ENCODE measurements at regions of chr1 and their contacts with region 1.

Region 1: DNA sequence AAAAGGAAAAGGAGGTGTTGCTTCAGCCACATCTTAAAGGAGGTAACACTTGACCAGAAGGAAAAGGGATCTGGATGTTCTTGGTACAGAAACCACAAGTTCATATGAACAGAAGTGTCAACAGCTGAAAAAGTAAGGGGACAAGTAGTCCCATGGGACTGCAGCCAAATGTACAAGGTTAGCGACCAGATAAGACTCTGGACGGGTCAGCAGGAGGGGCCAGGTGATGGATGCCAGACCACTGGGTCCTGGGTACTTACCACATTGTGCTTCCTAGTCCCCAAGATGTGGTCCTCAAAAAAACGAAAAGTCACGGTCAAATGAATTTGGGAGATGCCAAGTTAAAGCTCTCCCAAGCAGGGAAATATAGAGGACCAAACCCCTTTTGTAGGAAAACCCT is 16.6 kb upstream of the BMP8A start:
- DNase-seq: no peak
- ATAC-seq: no peak
- H3K4me3 ChIP-seq: no peak overlapping the region
- H3K27ac ChIP-seq: no peak overlapping the region
- H3K4me1 ChIP-seq: no peaks in the 10 kb centered on the region
- H3K27me3 ChIP-seq: no peaks in the 10 kb centered on the region
- CTCF ChIP-seq: no peak
- POLR2A ChIP-seq: no peak
- RAD21 ChIP-seq: no peak

Region 2: DNA sequence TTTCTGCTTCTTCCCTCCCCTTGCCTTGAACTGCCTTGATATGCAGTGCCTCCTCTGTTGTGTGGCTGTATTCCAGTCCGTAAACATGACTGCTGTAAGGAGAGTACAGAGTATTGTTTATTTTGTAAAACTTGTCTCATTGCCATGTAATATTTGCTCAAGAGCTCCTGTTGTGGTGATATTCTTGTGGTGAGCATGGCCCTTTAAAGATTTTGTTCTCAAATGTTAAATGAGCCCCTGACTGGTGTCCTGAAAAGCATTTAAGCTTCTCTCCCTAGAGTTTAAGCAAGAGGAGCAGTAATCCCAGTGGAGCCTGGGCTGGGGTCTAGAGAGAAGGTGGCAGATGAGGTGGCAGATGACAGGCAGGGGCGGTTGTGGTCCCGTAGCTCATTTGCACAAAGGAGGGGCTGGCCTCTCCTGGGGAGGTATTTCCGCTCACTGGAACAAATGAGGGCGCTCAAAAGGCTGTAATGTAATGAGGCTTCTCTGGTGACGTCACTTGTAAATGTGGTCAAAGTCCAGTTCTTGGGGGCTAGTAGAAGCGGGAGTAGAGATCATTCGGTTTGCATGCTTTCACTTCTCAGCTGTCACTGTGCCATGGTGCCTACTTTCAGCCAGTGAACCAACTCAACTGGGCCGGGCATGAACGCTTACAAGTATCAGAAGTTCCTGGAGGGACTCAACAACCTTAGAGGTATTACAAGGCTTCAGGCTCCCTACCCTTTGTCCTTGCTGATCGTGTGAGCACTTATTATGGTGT is 316.3 kb before region 1 on chr1:
- CTCF ChIA-PET with region 1: no interaction called
- POLR2A ChIA-PET with region 1: no interaction called
- RAD21 ChIA-PET with region 1: no interaction called
- intact Hi-C with region 1: no loop called
- DNase-seq: no peak
- ATAC-seq: 0 out of 2 replicates have a peak, but pooled peaks have one; percentile 20
- H3K4me3 ChIP-seq: no peak overlapping the region
- H3K27ac ChIP-seq: no peak overlapping the region
- H3K4me1 ChIP-seq: peaks cover 19 to 27% of the 10 kb centered on the region in 2 experiments
- H3K27me3 ChIP-seq: no peaks in the 10 kb centered on the region
- CTCF ChIP-seq: no peak
- POLR2A ChIP-seq: no peak
- RAD21 ChIP-seq: no peak

Region 3: GRCh38 chr1:39434797-39435395 is 39.9 kb before region 1 on chr1:
- CTCF ChIA-PET with region 1: no interaction called
- POLR2A ChIA-PET with region 1: no interaction called
- RAD21 ChIA-PET with region 1: no interaction called
- intact Hi-C with region 1: loop called (anchors 5 kb)
- DNase-seq: no peak
- ATAC-seq: no peak
- H3K4me3 ChIP-seq: no peak overlapping the region
- H3K27ac ChIP-seq: no peak overlapping the region
- H3K4me1 ChIP-seq: no peaks in the 10 kb centered on the region
- H3K27me3 ChIP-seq: no peaks in the 10 kb centered on the region
- CTCF ChIP-seq: no peak
- POLR2A ChIP-seq: no peak
- RAD21 ChIP-seq: no peak

Measured in HCT116 (cell line).